ENCODE measurements at regions of chr20 and their contacts with region 1.

Region 1: GRCh38 chr20:50645253-50646118 is 45.9 kb downstream of the RIPOR3 start:
- DNase-seq: peak; percentile 69 to 90
- ATAC-seq: peak; percentile 37
- H3K4me3 ChIP-seq: no peak overlapping the region
- H3K27ac ChIP-seq: no peak overlapping the region
- H3K4me1 ChIP-seq: no peaks in the 10 kb centered on the region
- H3K27me3 ChIP-seq: no peaks in the 10 kb centered on the region

Region 2: DNA sequence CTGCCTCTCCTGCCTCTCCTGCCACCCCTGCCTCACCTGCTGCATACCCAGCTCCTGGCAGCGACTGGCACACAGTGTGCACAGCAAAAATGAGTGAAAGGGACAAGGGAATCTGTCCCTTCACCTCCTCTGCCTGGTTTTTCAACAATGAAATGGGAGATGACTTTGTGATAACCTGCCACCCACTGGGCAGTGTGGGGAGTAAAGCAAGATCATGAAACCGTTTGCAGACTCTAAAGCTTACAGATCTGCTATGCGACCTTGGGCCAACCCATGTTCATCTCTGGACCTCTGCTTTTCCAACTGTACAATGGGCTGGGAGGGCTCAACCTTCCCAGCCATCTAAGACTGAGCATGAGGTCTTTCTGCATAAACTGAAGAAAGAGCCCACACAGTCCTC is 35.3 kb before region 1 on chr20:
- intact Hi-C with region 1: no loop called
- DNase-seq: no peak
- ATAC-seq: no peak
- H3K4me3 ChIP-seq: no peak overlapping the region
- H3K27ac ChIP-seq: no peak overlapping the region
- H3K4me1 ChIP-seq: no peaks in the 10 kb centered on the region
- H3K27me3 ChIP-seq: no peaks in the 10 kb centered on the region

Region 3: GRCh38 chr20:50713657-50714101 is 68.2 kb after region 1 on chr20:
- intact Hi-C with region 1: no loop called
- DNase-seq: no peak
- ATAC-seq: peak; percentile 36
- H3K4me3 ChIP-seq: no peak overlapping the region
- H3K27ac ChIP-seq: no peak overlapping the region
- H3K4me1 ChIP-seq: no peaks in the 10 kb centered on the region
- H3K27me3 ChIP-seq: no peaks in the 10 kb centered on the region

Region 4: DNA sequence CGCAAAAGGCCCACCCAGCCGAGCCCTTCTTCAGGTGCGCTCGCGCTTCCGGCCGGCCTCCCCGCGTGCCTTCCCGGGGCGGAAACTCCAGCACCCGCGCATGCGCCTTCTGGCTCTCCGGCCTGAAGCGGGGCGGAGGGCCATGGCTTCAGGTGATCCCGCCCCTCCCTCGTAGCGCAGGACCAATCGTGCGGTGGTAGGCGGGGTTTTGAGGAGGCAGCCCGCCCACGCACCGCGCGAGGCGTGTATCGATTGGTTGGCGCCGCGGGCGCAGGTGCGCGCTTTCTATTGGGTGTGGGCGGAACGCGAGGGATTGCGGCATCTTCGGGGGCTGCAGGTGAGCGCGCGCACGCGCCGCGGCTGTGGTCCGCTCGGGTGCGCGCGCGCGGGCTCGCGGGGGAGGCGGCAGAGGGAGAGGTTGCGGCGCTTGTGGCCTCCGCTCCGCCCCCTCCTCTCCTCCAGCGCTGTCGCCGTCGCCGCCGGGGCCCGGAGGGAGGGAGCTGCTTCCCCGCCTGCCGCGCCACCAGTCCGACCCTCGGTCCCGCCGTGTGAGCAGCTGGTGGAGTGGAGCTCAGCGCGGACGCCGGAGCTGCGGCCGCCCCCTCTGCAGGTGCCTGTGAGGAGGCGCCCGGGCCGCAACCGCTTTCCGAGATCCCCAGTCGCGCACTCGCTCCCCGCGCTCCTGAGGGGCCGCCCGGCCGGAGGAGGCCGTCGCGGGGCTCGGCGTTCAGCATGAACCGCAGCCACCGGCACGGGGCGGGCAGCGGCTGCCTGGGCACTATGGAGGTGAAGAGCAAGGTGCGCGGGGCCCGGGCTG is 85.8 kb after region 1 on chr20 and contains the start of gene PARD6B:
- intact Hi-C with region 1: loop called in 1 of 2 experiments (anchors 5 kb)
- DNase-seq: peak; percentile 96 to 97
- ATAC-seq: peak; percentile 95
- H3K4me3 ChIP-seq: peak within 1 kb of the TSS; percentile 64 to 73
- H3K27ac ChIP-seq: peak within 1 kb of the TSS in 1 of 2 donors; percentile 58
- H3K4me1 ChIP-seq: no peaks in the 10 kb centered on the region
- H3K27me3 ChIP-seq: no peaks in the 10 kb centered on the region
- total RNA-seq, gene PARD6B: 1.2 to 2.6 TPM

Region 5: DNA sequence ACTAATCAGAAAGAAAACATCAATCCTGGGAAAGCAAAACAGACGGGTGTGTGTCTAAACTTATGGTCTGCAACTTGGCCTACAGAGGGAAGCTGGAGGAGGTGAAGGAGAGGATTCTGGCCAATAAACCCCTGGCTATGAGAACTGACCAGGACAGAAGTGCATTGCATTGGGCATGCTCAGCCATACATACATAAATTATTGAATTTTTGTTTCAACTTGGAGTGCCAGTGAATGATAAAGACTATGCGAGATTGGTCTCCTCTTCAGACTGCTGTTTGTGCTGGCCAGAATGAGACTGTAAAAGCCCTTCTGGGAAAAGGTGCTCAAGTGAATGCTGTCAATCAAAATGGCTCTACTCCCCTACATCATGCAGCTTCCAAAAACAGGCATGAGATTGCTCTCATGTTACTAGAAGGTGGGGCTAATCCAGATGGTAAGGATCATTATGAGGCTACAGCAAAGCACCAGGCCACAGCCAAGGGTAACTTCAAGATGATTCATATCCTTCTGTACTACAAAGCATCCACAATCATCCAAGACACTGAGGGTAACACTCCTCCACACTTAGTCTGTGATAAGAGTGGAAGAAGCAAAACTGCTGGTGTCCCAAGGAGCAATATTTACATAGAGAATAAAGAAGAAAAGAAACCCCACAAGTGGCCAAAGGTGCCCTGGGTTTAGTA is 268.3 kb after region 1 on chr20:
- intact Hi-C with region 1: no loop called
- DNase-seq: no peak
- ATAC-seq: no peak
- H3K4me3 ChIP-seq: no peak overlapping the region
- H3K27ac ChIP-seq: peak overlapping the region in 1 of 2 donors; percentile 14
- H3K4me1 ChIP-seq: peaks cover 3 to 27% of the 10 kb centered on the region in 2 donors
- H3K27me3 ChIP-seq: no peaks in the 10 kb centered on the region